ENCODE measurements at regions of chr15 and their contacts with region 1.

Region 1: GRCh38 chr15:80015156-80015555 is 44.2 kb upstream of the BCL2A1 start:
- DNase-seq: no peak
- H3K4me3 ChIP-seq: no peak overlapping the region
- H3K27ac ChIP-seq: no peak overlapping the region
- H3K4me1 ChIP-seq: no peaks in the 10 kb centered on the region
- H3K27me3 ChIP-seq: no peaks in the 10 kb centered on the region
- CTCF ChIP-seq: no peak
- POLR2A ChIP-seq: no peak

Region 2: DNA sequence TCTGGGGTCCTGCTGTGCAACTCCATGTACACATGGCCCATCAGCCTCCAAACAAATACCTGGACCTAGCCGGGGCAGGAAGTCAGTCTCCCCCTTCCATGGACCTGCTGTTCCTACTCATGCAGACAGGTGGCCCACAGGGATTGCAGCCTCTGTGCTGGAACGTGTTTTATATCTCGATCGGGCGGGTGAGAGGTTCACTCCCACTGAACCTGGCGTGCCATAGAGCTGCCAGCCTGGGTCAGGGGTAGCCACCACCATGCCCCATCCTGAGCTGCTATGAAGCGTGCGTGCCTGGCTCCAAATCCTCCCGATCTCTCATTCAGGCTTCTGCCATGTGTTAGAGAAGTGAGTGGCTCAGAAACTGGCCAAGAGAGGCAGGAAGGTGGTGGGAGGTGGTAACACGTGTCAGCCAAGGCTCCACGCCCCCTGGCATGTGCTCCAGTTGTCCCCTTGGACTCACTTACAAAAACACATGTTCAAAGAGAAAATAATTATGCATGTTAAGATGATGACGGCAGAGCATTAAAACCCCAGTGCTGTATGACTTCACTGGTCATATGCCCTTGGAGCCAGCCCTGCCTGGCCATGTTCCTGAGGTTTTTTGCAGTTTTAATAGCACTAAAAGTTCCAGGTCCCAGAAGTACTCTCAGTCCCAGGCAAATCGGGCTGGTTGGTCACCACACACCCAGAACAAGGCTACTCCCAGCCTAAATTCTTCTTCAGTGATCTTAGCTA is 1101.0 kb before region 1 on chr15:
- intact Hi-C with region 1: no loop called
- DNase-seq: no peak
- H3K4me3 ChIP-seq: no peak overlapping the region
- H3K27ac ChIP-seq: peak overlapping the region; percentile 57 to 84
- H3K4me1 ChIP-seq: no peaks in the 10 kb centered on the region
- H3K27me3 ChIP-seq: no peaks in the 10 kb centered on the region
- CTCF ChIP-seq: peak in 2 of 3 donors; percentile 47 to 66
- POLR2A ChIP-seq: no peak

Region 3: GRCh38 chr15:80246425-80246894 is 231.3 kb after region 1 on chr15:
- intact Hi-C with region 1: loop called (anchors 5 kb)
- DNase-seq: no peak
- H3K4me3 ChIP-seq: no peak overlapping the region
- H3K27ac ChIP-seq: no peak overlapping the region
- H3K4me1 ChIP-seq: no peaks in the 10 kb centered on the region
- H3K27me3 ChIP-seq: peaks cover 0 to 19% of the 10 kb centered on the region in 2 donors
- CTCF ChIP-seq: no peak
- POLR2A ChIP-seq: no peak

Region 4: DNA sequence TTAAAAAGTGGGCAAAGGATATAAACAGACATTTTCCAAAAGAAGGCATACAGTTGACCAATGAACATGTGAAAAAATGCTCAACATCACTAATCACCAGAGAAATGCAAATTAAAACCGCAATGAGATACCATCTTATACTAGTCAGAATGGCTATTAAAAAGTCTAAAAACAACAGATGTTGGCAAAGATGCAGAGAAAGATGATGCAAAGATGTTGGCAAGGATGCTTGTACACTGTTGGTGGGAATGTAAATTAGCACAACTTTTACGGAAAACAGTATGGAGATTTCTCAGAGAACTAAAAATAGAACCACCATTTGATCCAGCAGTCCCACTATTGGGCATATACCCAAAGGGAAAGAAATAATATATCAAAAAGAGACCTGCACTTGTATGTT is 1039.1 kb after region 1 on chr15:
- intact Hi-C with region 1: no loop called
- DNase-seq: no peak
- H3K4me3 ChIP-seq: no peak overlapping the region
- H3K27ac ChIP-seq: no peak overlapping the region
- H3K4me1 ChIP-seq: no peaks in the 10 kb centered on the region
- H3K27me3 ChIP-seq: no peaks in the 10 kb centered on the region
- CTCF ChIP-seq: no peak
- POLR2A ChIP-seq: no peak

Region 5: GRCh38 chr15:81221449-81221848 is 1206.3 kb after region 1 on chr15:
- intact Hi-C with region 1: no loop called
- DNase-seq: no peak
- H3K4me3 ChIP-seq: no peak overlapping the region
- H3K27ac ChIP-seq: peak overlapping the region; percentile 45 to 86
- H3K4me1 ChIP-seq: no peaks in the 10 kb centered on the region
- H3K27me3 ChIP-seq: no peaks in the 10 kb centered on the region
- CTCF ChIP-seq: no peak
- POLR2A ChIP-seq: no peak

Measured in breast epithelium (tissue), 4 donors.